SK-N-SH (cell line): ENCODE measurements at regions of chr2 and their contacts with region 1.

Region 1: GRCh38 chr2:210503001-210503623 is 26.6 kb upstream of the LANCL1 start:
- DNase-seq: peak; percentile 53
- H3K4me3 ChIP-seq: peak overlapping the region; percentile 14 to 21; a peak in 2 of 4 replicates
- H3K27ac ChIP-seq: no peak overlapping the region
- H3K4me1 ChIP-seq: no peaks in the 10 kb centered on the region
- H3K27me3 ChIP-seq: no peaks in the 10 kb centered on the region
- CTCF ChIP-seq: peak; percentile 90
- EP300 ChIP-seq: no peak
- RAD21 ChIP-seq: peak; percentile 76

Region 2: DNA sequence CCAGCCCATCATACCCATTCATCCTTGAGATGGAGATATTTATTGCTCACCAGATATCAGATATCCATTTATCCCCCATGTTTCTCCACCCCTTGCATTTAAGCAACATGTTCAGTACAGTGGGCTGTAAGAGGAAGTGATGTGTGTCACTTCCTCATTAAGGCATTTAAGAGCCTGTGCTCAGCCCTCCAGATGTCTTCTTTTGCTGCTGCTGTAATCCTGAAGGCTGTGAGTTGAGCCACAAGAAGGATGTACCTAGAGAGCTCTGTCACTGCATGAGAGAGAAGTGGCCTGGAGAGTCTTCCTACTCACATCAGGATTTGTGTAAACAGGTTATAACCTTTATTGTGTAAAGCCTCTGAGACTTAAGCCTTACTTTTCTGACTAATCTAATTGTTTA is 883.3 kb before region 1 on chr2:
- CTCF ChIA-PET with region 1: no interaction called
- POLR2A ChIA-PET with region 1: no interaction called
- DNase-seq: no peak
- H3K4me3 ChIP-seq: no peak overlapping the region
- H3K27ac ChIP-seq: no peak overlapping the region
- H3K4me1 ChIP-seq: no peaks in the 10 kb centered on the region; a peak in 1 of 4 replicates
- H3K27me3 ChIP-seq: no peaks in the 10 kb centered on the region
- CTCF ChIP-seq: no peak
- EP300 ChIP-seq: no peak
- RAD21 ChIP-seq: no peak

Region 3: DNA sequence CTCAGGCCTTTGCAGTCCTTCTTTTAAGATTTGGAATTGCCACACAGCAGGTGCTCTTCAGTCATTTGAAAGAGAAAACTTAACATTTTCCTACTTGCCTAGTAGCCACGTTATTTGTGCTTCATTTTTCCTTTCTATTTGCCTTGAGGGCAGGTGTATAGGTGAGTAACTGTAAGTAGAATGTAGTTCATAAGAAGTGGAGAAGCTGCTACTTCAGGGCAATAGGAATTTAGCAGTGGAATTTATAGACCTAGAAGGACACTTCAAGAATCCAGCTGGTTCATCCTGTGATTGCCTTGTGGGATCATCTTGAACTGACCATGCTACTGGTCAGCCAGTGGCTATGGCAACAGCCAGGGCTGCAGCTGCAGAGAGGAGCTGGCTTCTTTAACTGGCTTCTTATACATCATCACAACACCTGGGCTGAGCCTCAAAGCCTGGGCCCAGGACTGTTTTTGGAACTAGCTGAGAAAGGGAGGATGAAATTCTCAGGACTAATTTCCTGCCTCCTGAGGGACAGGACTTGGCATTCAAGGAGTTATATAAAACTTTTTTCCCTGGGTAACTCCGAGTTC is 21.4 kb before region 1 on chr2:
- CTCF ChIA-PET with region 1: interaction called, 11 read pairs
- POLR2A ChIA-PET with region 1: no interaction called
- DNase-seq: no peak
- H3K4me3 ChIP-seq: no peak overlapping the region
- H3K27ac ChIP-seq: no peak overlapping the region
- H3K4me1 ChIP-seq: peaks cover 0 to 2% of the 10 kb centered on the region in 2 experiments; a peak in 1 of 4 replicates
- H3K27me3 ChIP-seq: no peaks in the 10 kb centered on the region
- CTCF ChIP-seq: no peak
- EP300 ChIP-seq: no peak
- RAD21 ChIP-seq: no peak

Region 4: DNA sequence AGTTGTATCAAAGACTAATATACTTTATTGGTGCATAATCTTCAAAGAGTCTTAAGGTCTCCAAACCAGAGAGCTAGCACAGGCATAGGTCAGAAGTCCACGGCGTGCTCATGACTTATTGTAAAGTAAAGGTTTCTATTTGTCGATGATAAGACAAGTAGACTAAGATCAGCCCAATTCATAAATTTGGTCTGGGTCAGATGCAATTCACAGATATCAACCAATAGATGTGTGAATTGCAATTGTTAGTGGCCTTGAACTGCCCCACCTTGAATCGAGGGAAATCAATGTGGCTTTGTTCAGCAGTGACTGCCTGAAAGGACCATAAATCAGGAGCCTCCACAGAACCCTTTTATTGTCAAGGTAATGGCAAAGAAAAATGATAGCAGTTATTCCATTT is 14.1 kb after region 1 on chr2:
- CTCF ChIA-PET with region 1: interaction called, 22 read pairs
- POLR2A ChIA-PET with region 1: no interaction called
- DNase-seq: no peak
- H3K4me3 ChIP-seq: no peak overlapping the region
- H3K27ac ChIP-seq: no peak overlapping the region
- H3K4me1 ChIP-seq: no peaks in the 10 kb centered on the region
- H3K27me3 ChIP-seq: no peaks in the 10 kb centered on the region
- CTCF ChIP-seq: no peak
- EP300 ChIP-seq: no peak
- RAD21 ChIP-seq: no peak

Region 5: DNA sequence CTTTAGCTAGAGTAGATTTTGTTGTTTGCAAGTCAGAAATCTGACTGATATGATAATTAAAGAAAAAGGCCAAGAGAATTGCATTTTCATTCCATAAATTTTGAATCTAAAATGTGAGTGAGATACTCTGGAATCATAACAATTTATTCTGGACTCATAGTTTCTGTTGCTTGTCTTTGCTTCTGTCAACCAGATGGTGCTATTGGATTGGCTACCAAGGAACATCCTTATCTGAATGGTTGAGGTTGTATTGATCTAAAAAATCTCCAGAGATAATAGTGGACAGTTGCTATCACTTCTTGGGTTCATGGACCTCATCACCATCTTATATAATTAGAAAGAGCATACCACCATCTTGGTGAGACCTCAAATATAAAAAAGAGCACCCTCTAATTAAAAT is 19.3 kb after region 1 on chr2:
- CTCF ChIA-PET with region 1: interaction called, 22 read pairs
- POLR2A ChIA-PET with region 1: no interaction called
- DNase-seq: no peak
- H3K4me3 ChIP-seq: no peak overlapping the region
- H3K27ac ChIP-seq: no peak overlapping the region
- H3K4me1 ChIP-seq: no peaks in the 10 kb centered on the region
- H3K27me3 ChIP-seq: no peaks in the 10 kb centered on the region
- CTCF ChIP-seq: no peak
- EP300 ChIP-seq: no peak
- RAD21 ChIP-seq: peak; percentile 14; the same call in 1 of the 2 replicates

Region 6: GRCh38 chr2:210534879-210535278 is 31.8 kb after region 1 on chr2:
- CTCF ChIA-PET with region 1: interaction called, 18 read pairs
- POLR2A ChIA-PET with region 1: no interaction called
- DNase-seq: no peak
- H3K4me3 ChIP-seq: no peak overlapping the region
- H3K27ac ChIP-seq: no peak overlapping the region
- H3K4me1 ChIP-seq: peaks cover 0 to 4% of the 10 kb centered on the region in 2 experiments; a peak in 2 of 4 replicates
- H3K27me3 ChIP-seq: no peaks in the 10 kb centered on the region
- CTCF ChIP-seq: no peak
- EP300 ChIP-seq: no peak
- RAD21 ChIP-seq: no peak

Region 7: GRCh38 chr2:210558708-210559107 is 55.6 kb after region 1 on chr2:
- CTCF ChIA-PET with region 1: interaction called, 15 read pairs
- POLR2A ChIA-PET with region 1: no interaction called
- DNase-seq: no peak
- H3K4me3 ChIP-seq: no peak overlapping the region
- H3K27ac ChIP-seq: no peak overlapping the region
- H3K4me1 ChIP-seq: no peaks in the 10 kb centered on the region
- H3K27me3 ChIP-seq: no peaks in the 10 kb centered on the region
- CTCF ChIP-seq: no peak
- EP300 ChIP-seq: no peak
- RAD21 ChIP-seq: no peak

Region 8: GRCh38 chr2:210617732-210618330 is 114.7 kb after region 1 on chr2:
- CTCF ChIA-PET with region 1: interaction called, 12 read pairs
- POLR2A ChIA-PET with region 1: no interaction called
- DNase-seq: peak; percentile 55
- H3K4me3 ChIP-seq: peak overlapping the region in 1 of 2 experiments; percentile 36; a peak in 1 of 4 replicates
- H3K27ac ChIP-seq: no peak overlapping the region
- H3K4me1 ChIP-seq: no peaks in the 10 kb centered on the region
- H3K27me3 ChIP-seq: no peaks in the 10 kb centered on the region
- CTCF ChIP-seq: peak; percentile 84
- EP300 ChIP-seq: no peak
- RAD21 ChIP-seq: peak; percentile 92

Region 9: DNA sequence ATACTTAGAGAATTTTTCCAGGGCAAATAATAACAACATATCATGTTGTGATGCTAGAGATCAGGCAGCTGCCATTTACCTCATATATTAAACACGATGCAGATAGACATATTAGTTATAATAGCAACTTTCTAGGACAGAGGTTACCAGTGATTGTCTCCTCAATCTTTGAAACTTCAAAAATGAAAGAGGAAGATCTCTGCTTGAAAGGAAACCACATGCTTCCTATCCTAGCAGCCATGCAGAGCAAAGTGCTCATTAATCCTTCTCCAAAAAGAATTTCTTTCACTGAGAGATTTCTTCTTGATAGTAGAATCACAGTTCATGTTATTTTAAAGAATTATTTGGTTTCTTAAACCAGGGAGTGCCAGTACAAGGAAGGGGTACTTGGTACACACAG is 370.5 kb after region 1 on chr2:
- CTCF ChIA-PET with region 1: no interaction called
- POLR2A ChIA-PET with region 1: no interaction called
- DNase-seq: no peak
- H3K4me3 ChIP-seq: no peak overlapping the region
- H3K27ac ChIP-seq: no peak overlapping the region
- H3K4me1 ChIP-seq: no peaks in the 10 kb centered on the region
- H3K27me3 ChIP-seq: no peaks in the 10 kb centered on the region
- CTCF ChIP-seq: no peak
- EP300 ChIP-seq: no peak
- RAD21 ChIP-seq: no peak